Sigmoid colon (tissue), 7 donors: ENCODE measurements at regions of chr1 and their contacts with region 1.

Region 1: DNA sequence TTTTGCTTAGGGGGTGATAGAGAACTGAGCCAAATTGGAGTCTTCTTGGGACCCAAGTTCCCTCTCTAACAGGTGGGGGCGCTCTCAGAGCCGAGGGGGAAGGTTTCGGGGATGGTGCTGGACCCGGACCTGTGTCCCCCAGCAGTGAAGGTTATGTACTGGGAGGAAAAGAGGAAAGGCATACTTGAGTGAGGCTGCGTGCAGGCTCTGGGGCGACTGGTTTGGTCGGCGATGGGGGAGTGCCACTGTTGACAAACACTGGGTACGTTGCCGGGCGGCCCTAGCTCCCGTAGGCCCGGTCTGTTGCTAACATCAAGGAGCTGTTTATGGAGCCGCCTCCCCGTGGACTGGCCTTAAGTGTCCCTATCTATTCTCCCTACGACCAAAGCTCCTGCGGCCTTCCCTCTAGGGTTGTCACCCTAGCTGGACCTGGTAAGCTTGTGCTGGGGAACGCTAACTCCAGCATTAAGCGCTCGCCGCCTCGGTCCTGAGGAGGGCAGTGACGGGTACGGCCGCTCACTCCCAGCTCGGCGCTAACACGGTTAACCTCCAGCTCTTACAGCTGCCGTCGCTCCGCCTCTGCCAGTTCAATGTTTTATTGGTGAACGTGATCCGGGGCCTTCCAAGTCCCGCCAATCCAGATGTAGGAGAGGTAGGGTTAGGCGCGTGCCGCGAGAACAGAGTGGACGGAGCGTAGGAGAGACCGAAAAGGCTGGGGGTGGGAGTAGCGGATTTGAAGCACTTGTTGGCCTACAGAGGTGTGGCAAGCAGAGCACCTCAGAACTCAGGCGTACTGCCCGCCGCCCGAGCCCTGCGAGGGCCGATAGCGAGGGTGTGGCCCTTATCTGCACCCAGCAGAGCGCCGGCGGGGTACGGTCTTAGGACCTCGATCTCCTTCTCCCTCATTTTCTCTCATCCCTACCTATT is at the start of gene PPOX:
- DNase-seq: peak; percentile 99
- H3K4me3 ChIP-seq: peak within 1 kb of the TSS; percentile 53 to 83 (median 78)
- H3K27ac ChIP-seq: peak within 1 kb of the TSS; percentile 82 to 89 (median 86)
- H3K4me1 ChIP-seq: peaks cover 0 to 40% (median 33%) of the 10 kb centered on the region in 4 donors
- H3K27me3 ChIP-seq: no peaks in the 10 kb centered on the region
- CTCF ChIP-seq: peak in 3 of 4 experiments; percentile 28 to 40 (median 30)
- EP300 ChIP-seq: peak in 2 of 4 donors; percentile 8 to 58
- POLR2A ChIP-seq: peak in 1 of 2 donors; percentile 11
- total RNA-seq, gene PPOX: 16.6 to 30.9 (median 21.3) TPM

Region 2: DNA sequence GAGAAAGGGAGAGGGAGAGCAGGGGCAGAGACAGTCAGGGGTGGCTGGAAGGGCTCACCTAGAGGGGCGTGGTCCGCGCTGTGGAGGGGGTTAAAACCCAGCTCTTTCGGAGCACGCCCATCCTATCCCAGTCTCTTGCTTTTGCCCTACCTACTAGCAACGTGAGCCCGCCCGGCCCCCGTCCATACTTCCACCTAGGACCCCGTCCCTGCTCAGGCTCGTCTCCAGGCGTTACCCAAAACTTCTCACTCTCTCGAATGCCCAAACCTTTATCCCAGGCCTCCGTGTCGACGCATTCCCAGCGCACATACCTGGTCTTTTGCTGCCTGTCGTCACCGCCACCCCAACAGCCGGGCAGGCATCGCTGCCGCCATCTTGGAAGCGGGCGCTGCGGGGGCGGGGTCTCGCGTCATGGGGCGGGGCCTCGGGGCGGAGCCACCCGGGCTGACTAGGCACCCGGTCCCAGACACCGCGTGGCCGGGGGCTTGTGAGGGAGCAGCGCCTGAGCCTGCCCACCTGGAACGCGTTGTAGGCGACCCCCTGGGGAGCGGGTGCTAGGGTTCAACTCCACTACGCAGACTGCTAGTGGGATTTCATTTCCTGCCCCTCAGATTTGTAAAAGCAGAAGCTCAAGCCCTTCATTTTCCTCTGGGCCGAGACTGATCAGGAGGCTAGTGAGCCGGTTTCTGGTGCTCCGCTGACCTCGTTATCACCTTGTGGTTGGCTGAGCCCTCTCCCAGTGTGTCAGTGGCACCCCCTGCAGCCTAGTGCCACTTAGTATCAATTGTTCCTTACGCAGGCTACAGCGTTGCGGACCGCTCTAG is 11.3 kb after region 1 on chr1 and contains the start of gene B4GALT3:
- intact Hi-C with region 1: loop called (anchors 1 kb)
- DNase-seq: peak; percentile 93
- H3K4me3 ChIP-seq: peak within 1 kb of the TSS; percentile 64 to 78 (median 76)
- H3K27ac ChIP-seq: peak within 1 kb of the TSS; percentile 85 to 92 (median 88)
- H3K4me1 ChIP-seq: peaks cover 0 to 38% (median 24%) of the 10 kb centered on the region in 4 donors
- H3K27me3 ChIP-seq: no peaks in the 10 kb centered on the region
- CTCF ChIP-seq: peak in 1 of 4 experiments; percentile 7
- EP300 ChIP-seq: no peak
- POLR2A ChIP-seq: peak; percentile 67 to 71
- total RNA-seq, gene B4GALT3: 10.7 to 19.3 (median 14.8) TPM